Ascending aorta (tissue), 2 donors: ENCODE measurements at regions of chr19 and their contacts with region 1.

Region 1: GRCh38 chr19:8005534-8006256 is at the start of gene ELAVL1:
- DNase-seq: peak; percentile 45 to 92
- H3K4me3 ChIP-seq: peak within 1 kb of the TSS; percentile 87 to 98
- H3K27ac ChIP-seq: peak within 1 kb of the TSS; percentile 78 to 88
- H3K4me1 ChIP-seq: peaks cover 0 to 27% of the 10 kb centered on the region in 2 donors
- H3K27me3 ChIP-seq: no peaks in the 10 kb centered on the region
- CTCF ChIP-seq: no peak
- total RNA-seq, gene ELAVL1: 19.9 TPM

Region 2: DNA sequence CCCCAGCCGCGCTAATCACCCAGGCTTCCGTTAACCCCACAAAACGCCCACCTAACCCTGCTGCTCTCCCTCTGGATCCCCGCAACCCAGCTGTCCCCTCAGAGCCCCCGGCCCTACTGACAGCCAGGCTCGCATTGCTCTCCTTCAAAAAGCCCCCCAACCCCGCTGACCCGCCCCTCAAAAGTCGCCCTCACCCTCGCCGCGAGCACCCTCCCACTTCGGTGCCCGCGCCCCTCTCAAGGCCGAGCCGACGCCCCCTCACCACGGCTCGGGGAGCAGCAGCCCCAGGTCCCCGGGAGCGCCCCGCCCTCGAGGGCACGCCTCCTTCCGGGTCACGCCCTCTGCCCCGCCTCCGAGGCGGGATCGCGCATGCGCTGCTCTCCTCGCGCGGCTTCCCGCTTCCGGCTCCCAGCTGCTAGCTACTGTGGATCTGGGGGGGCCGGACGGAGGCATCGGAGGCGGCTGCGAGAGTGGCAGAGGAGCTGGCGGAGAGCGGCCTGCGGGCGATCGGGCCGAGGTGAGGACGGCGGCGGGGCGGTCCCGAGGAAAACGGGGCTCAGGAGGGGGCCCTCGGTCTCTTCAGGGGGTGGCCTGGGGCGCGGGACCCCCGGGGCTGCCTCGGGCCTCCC is 610.9 kb before region 1 on chr19:
- intact Hi-C with region 1: loop called (anchors 10 kb)
- DNase-seq: peak; percentile 48 to 93
- H3K4me3 ChIP-seq: peak overlapping the region; percentile 77 to 89
- H3K27ac ChIP-seq: peak overlapping the region; percentile 42 to 73
- H3K4me1 ChIP-seq: peaks cover 0 to 14% of the 10 kb centered on the region in 2 donors
- H3K27me3 ChIP-seq: no peaks in the 10 kb centered on the region
- CTCF ChIP-seq: no peak

Region 3: GRCh38 chr19:7829561-7830271 is 176.0 kb before region 1 on chr19 and contains the start of gene EVI5L:
- intact Hi-C with region 1: loop called (anchors 1 kb)
- DNase-seq: peak; percentile 99
- H3K4me3 ChIP-seq: peak within 1 kb of the TSS; percentile 69 to 98
- H3K27ac ChIP-seq: no peak within 1 kb of the TSS
- H3K4me1 ChIP-seq: peaks cover 3 to 9% of the 10 kb centered on the region in 2 donors
- H3K27me3 ChIP-seq: no peaks in the 10 kb centered on the region
- CTCF ChIP-seq: no peak
- total RNA-seq, gene EVI5L: 27.7 TPM

Region 4: DNA sequence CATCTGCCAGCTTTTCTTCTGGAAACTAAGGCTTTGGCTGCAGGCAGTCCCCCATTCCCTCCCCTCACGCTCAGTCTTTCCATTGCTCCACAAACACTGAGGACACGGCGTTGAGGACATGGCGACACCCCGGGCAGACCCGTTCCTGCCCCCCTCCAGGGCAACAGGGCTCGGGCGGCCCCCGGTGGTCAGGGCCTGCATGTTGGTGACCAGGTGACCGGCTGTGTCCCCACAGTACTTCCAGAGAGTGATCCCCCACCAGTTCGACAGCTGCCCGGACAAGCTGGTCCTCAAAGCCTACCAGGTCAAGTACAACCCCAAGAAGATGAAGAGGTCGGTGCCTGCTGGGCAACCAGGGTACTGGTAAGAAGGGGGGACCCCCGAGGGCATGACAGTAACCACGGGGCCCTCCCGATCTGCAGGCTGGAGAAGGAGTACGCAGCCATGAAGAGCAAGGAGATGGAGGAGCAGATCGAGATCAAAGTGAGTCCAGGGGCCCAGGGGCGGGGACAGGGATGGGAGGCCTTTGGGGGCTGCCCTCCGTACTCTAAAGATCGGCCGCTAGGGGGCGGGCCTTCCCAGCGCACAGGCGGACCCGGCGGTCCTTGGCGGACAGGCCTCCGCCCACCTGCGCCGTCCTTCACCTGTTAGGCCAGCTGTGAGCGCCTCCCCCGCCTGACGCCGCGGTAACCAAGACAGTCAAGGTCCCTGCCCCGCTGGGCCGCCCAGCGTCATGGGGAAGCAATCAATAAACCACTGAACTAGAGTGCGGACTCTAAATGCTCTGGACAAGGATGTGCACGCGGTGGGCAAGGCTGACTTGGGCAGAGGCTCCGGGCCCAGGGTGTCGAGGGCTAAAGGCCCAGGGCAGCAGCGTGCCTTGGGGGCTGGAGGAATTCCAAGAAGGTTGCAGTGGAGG is 152.6 kb before region 1 on chr19:
- intact Hi-C with region 1: loop called (anchors 5 kb)
- DNase-seq: no peak
- H3K4me3 ChIP-seq: no peak overlapping the region
- H3K27ac ChIP-seq: no peak overlapping the region
- H3K4me1 ChIP-seq: no peaks in the 10 kb centered on the region
- H3K27me3 ChIP-seq: no peaks in the 10 kb centered on the region
- CTCF ChIP-seq: peak; percentile 55 to 81 (median 71)

Region 5: GRCh38 chr19:7928736-7929701 is 76.7 kb before region 1 on chr19:
- intact Hi-C with region 1: no loop called
- DNase-seq: peak in 1 of 2 donors; percentile 90
- H3K4me3 ChIP-seq: peak overlapping the region; percentile 10 to 51
- H3K27ac ChIP-seq: peak overlapping the region; percentile 93 to 96
- H3K4me1 ChIP-seq: peaks cover 18 to 58% of the 10 kb centered on the region in 2 donors
- H3K27me3 ChIP-seq: no peaks in the 10 kb centered on the region
- CTCF ChIP-seq: peak; percentile 2 to 37 (median 35)

Region 6: DNA sequence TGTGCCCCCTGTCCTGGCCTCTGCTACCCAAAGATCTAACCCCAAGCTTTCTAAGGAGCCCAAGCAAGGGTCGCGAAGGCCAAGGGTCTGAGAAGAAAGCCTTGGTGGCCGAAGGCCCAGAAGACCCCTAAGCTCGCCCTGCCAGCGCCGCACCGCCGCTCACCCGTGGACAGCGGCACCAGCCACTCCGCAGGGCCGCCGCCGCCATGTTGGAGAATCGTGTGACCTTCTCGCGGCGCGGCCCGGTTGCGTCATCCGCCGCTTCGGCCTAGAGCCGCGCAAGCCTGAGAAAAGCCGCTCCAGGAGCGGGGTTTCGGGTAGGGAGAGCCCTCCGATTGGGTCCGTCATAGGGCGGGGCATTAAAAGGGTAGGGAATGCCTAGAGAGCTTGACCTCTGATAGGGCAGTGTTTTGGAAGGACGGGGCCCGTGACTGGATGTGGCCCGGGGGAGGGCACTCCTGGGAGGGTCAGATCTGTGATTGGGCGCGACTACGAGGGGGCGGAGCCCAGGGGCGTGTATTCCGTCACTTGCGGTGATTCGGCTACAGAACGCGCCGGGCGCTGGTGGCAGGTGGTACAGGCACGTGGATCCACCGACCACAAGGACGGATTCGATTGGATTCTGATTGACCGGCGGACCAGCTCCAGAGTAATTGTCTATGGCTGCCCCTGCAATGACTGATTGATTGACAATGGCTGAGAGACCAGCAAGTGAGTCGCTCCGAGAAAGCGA is 62.1 kb before region 1 on chr19 and contains the start of gene TIMM44:
- intact Hi-C with region 1: loop called (anchors 1 kb)
- DNase-seq: peak; percentile 98 to 100
- H3K4me3 ChIP-seq: peak within 1 kb of the TSS; percentile 58 to 81
- H3K27ac ChIP-seq: peak within 1 kb of the TSS; percentile 91 to 93
- H3K4me1 ChIP-seq: peaks cover 0 to 13% of the 10 kb centered on the region in 2 donors
- H3K27me3 ChIP-seq: no peaks in the 10 kb centered on the region
- CTCF ChIP-seq: no peak
- total RNA-seq, gene TIMM44: 151 TPM

Region 7: GRCh38 chr19:8041531-8041931 is 35.8 kb after region 1 on chr19:
- intact Hi-C with region 1: no loop called
- DNase-seq: no peak
- H3K4me3 ChIP-seq: no peak overlapping the region
- H3K27ac ChIP-seq: no peak overlapping the region
- H3K4me1 ChIP-seq: no peaks in the 10 kb centered on the region
- H3K27me3 ChIP-seq: no peaks in the 10 kb centered on the region
- CTCF ChIP-seq: no peak

Region 8: GRCh38 chr19:8321060-8321985 is 315.6 kb after region 1 on chr19 and contains the starts of genes NDUFA7 and RPS28:
- intact Hi-C with region 1: loop called (anchors 10 kb)
- DNase-seq: peak; percentile 79 to 98
- H3K4me3 ChIP-seq: peak within 1 kb of the TSS; percentile 64 to 97
- H3K27ac ChIP-seq: peak within 1 kb of the TSS; percentile 80 to 90
- H3K4me1 ChIP-seq: peaks cover 12 to 22% of the 10 kb centered on the region in 2 donors
- H3K27me3 ChIP-seq: no peaks in the 10 kb centered on the region
- CTCF ChIP-seq: peak in 2 of 3 experiments; percentile 26 to 31
- total RNA-seq, gene NDUFA7: 11.8 TPM
- total RNA-seq, gene RPS28: 393 TPM